Activated naive CD4-positive, alpha-beta T cell treated with anti-CD3 and anti-CD28 coated beads for 36 hours (primary cell): ENCODE measurements at regions of chr16 and their contacts with region 1.

Region 1: GRCh38 chr16:12455287-12455798 is 348.3 kb downstream of the CPPED1 start:
- DNase-seq: peak; percentile 65
- H3K4me3 Mint-ChIP-seq: no peak overlapping the region
- H3K27ac Mint-ChIP-seq: no peak overlapping the region
- H3K4me1 Mint-ChIP-seq: peaks cover 24% of the 10 kb centered on the region
- H3K27me3 Mint-ChIP-seq: no peaks in the 10 kb centered on the region

Region 2: GRCh38 chr16:12089492-12090150 is 365.7 kb before region 1 on chr16:
- CTCF ChIA-PET with region 1: no interaction called
- intact Hi-C with region 1: loop called (anchors 10 kb)
- DNase-seq: peak; percentile 77
- H3K4me3 Mint-ChIP-seq: peak overlapping the region; percentile 78
- H3K27ac Mint-ChIP-seq: peak overlapping the region; percentile 88
- H3K4me1 Mint-ChIP-seq: peaks cover 35% of the 10 kb centered on the region
- H3K27me3 Mint-ChIP-seq: no peaks in the 10 kb centered on the region

Region 3: DNA sequence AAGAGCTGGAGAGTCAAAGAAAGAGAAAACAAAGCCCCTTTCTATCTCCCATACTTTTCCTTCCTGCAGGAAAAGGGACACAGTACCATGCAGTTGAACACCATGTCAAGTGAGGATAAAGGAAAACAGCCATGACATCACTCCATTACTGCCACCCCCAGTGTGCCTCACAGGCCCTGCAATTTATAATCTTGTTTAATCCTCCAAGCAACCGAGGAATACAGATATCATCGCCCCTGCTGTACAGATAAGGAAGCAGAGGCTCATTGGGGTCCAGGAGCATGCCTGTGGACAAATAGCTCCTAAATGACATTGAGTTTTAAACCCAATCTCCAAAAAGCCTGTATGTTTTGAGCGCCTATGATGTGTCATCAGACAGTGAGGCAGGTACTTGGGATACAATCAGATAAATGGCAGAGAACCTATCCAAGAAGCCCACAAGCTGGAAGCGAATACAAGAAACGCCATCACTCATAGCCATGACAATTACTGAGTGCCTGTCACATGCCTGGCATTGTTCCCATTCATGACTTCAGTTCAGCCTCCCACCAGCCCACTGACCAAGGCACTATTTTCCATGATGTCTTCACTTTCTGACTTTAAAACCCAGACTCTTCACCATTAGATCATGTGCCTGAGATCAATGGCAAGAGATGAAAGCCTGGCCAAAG is 302.8 kb after region 1 on chr16:
- CTCF ChIA-PET with region 1: no interaction called
- intact Hi-C with region 1: loop called (anchors 10 kb)
- DNase-seq: no peak
- H3K4me3 Mint-ChIP-seq: no peak overlapping the region
- H3K27ac Mint-ChIP-seq: no peak overlapping the region
- H3K4me1 Mint-ChIP-seq: no peaks in the 10 kb centered on the region
- H3K27me3 Mint-ChIP-seq: no peaks in the 10 kb centered on the region

Region 4: DNA sequence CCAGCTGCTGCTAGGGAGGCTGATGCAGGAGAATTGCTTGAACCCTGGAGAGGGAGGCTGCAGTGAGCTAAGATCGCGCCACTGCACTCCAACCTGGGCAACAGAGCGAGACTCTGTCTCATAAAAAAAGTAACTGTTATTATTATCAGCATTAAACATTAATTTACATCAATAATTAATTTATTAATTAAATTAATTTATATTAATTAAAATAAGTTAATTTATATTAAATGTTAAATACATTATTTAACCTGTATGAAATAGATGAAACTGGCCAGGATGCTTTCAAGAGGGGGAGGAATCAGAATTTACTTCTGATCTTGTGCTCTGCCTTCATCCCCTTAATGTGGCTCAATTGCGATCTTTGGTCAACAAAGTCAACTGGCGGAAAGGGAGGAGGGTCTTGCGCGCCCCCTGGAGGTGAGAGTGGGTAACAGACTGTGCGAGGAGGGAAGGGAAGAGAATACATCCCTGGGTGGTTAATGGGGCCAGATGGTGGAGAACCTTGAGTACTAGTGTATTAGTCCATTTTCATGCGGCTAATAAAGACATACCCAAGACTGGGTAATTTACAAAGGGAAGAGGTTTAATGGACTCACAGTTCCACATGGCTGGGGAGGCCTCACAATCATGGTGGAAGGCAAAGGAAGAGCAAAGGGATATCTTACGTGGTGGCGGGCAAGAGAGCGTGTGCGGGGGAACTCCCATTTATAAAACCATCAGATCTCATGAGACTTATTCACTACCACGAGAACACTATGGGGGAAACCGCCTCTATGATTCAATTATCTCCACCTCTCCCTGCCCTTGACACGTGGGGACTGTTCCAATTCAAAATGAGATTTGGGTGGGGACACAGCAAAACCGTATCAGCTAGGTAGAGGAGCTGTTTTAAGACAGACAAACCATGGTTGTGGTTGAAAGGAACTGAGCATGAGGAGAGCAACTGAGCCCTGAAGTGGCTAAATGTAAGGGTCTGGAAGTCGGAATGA is 364.1 kb after region 1 on chr16:
- CTCF ChIA-PET with region 1: interaction called, 12 read pairs
- intact Hi-C with region 1: loop called (anchors 1 kb)
- DNase-seq: peak; percentile 88
- H3K4me3 Mint-ChIP-seq: no peak overlapping the region
- H3K27ac Mint-ChIP-seq: no peak overlapping the region
- H3K4me1 Mint-ChIP-seq: no peaks in the 10 kb centered on the region
- H3K27me3 Mint-ChIP-seq: no peaks in the 10 kb centered on the region